Dorsolateral prefrontal cortex (tissue), 120 donors: ENCODE measurements at regions of chr18 and their contacts with region 1.

Region 1: DNA sequence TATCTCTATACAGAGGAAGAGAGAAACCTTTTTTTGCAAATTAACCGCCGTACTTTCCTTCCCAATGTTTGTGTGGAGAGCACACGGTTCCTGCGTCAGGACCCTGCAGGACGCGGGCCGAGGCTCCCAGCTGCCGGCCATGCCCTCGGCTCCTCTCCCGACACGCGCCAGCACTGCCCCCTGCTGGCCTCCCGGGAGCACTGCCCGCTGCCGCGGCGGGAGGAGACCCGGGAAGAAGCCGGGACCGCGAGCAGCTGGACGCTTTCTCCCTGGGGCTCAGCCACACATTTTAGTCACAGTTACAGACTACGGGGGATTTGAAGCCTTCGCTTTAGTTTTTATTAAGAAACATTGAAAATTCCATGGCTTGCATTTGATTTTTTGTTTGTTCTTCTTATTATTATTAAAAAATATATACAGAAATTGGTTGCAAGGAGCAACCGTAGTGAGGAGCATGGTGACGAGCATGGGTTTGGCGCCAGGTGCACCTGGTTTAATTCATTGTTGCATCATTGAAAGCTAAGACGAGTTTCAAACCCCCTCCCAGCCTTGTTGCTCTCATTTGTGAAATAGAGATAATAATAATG is 401.2 kb downstream of the GALR1 start:
- DNase-seq: peak; percentile 29 to 90 (median 64)
- H3K4me3 ChIP-seq: peak overlapping the region in 39 of 59 donors; percentile 1 to 50 (median 23)
- H3K27ac ChIP-seq: no peak overlapping the region
- H3K27me3 ChIP-seq: peaks cover 0 to 5% (median 0%) of the 10 kb centered on the region in 45 donors
- CTCF ChIP-seq: peak; percentile 70 to 99 (median 95)

Region 2: GRCh38 chr18:76922107-76922506 is 728.8 kb before region 1 on chr18:
- intact Hi-C with region 1: loop called in 1 of 2 experiments (anchors 5 kb)
- DNase-seq: peak in 9 of 10 donors; percentile 59 to 81 (median 75)
- H3K4me3 ChIP-seq: no peak overlapping the region
- H3K27ac ChIP-seq: peak overlapping the region in 2 of 59 donors; percentile 2 to 14
- H3K27me3 ChIP-seq: no peaks in the 10 kb centered on the region
- CTCF ChIP-seq: peak; percentile 33 to 98 (median 79)

Region 3: GRCh38 chr18:77000527-77000926 is 650.4 kb before region 1 on chr18:
- intact Hi-C with region 1: loop called in 1 of 2 experiments (anchors 5 kb)
- DNase-seq: peak in 7 of 10 donors; percentile 37 to 70 (median 51)
- H3K4me3 ChIP-seq: peak overlapping the region in 49 of 59 donors; percentile 7 to 84 (median 37)
- H3K27ac ChIP-seq: peak overlapping the region in 51 of 59 donors; percentile 7 to 99 (median 63)
- H3K27me3 ChIP-seq: no peaks in the 10 kb centered on the region
- CTCF ChIP-seq: peak; percentile 87 to 100 (median 95)

Region 4: DNA sequence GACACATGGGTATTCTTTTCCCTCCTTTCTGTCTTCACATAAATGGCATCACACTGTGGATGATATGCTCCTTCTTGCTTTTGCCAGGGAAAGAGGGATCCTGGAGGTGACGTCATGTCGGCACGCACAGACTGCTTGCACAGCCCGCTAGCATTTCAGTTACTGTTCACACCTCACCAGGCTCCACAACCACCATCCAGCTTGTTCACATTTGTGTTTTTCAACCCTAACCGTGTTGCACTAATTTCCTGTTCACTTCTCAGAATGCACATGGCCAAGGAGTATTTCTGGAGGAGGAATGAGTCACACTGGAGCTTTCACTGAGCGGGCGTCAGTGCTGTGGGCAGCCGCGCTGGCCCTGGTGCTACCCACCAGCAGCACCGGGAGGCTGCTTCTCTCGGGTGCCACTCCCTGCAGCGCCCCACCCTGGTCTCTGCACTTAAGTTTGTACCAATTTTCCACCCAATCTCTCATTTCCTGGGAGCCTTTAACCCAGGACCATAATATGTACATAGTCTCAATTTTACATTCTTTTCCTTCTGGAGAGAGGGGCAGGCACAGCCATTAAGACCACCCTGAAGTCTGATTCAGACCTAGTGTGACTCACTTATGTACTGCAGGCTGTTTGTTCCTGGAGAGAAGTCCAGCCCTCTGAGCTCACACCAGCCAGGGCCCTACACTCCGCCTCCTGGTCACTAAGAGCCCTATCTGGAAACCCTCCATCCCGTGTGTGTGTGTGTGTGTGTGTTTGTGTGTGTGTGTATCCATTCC is 583.4 kb before region 1 on chr18:
- intact Hi-C with region 1: loop called in 1 of 2 experiments (anchors 2 kb)
- DNase-seq: peak in 4 of 10 donors; percentile 54 to 74 (median 68)
- H3K4me3 ChIP-seq: peak overlapping the region in 2 of 59 donors; percentile 1 to 4
- H3K27ac ChIP-seq: peak overlapping the region in 50 of 59 donors; percentile 7 to 85 (median 58)
- H3K27me3 ChIP-seq: no peaks in the 10 kb centered on the region
- CTCF ChIP-seq: peak in 4 of 56 donors; percentile 5 to 36 (median 19)

Region 5: DNA sequence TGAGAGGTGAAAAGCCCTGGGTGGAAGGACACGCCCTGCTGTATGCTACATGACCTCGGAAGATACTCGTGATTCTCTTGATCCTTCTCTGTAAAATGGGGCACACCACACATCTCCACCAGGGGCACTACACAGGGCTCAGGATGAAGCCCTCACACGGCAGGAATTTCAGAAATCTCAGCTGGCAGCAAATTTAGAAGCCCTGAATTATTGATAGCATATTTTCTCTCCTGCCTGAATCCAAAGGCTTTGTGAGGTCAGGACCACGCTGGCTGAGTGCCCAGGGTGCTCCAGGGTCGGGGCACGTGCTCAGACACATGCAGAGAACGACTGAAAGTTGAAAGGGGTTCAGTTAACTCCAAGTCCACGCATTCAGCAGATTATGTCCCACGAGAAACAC is 443.4 kb before region 1 on chr18:
- intact Hi-C with region 1: loop called in 1 of 2 experiments (anchors 10 kb)
- DNase-seq: peak in 1 of 10 donors; percentile 44
- H3K4me3 ChIP-seq: peak overlapping the region in 23 of 59 donors; percentile 1 to 51 (median 20)
- H3K27ac ChIP-seq: peak overlapping the region in 3 of 59 donors; percentile 17 to 54 (median 36)
- H3K27me3 ChIP-seq: no peaks in the 10 kb centered on the region
- CTCF ChIP-seq: peak in 55 of 56 donors; percentile 14 to 74 (median 55)

Region 6: DNA sequence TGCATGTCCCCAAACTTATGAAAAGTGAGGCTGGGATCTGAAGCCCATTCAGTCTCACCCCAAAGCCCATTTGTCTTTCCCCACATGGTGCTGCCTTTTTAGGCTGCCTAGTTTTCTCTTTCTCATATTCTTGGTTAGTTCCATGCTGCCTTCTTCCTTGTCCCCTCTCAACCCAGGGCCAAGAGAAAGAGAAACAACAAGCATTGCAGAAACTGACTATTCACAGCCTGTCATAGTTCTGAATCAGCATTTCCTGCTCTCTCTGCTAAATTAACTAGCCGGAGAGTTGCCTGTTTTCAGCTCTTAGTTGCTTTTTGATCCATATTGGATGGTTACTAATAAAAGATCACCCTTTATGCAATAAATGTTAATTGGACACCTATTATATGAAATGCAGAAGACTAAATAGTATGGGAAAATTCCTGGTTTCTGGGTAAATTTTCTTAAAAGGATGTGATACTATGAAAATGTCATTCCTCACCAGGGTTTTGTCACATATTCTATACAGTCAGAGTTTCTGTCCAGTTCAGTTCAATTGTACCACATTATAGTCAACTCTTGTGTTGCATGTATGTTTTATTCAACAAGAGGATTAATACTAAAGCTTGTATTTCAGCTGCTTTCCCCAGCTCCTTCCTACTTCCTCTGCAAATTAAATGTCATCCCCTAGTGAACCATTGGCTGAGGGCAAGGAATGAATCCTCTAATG is 154.8 kb before region 1 on chr18:
- intact Hi-C with region 1: no loop called
- DNase-seq: no peak
- H3K4me3 ChIP-seq: no peak overlapping the region
- H3K27ac ChIP-seq: peak overlapping the region in 1 of 59 donors; percentile 11
- H3K27me3 ChIP-seq: no peaks in the 10 kb centered on the region
- CTCF ChIP-seq: no peak

Region 7: DNA sequence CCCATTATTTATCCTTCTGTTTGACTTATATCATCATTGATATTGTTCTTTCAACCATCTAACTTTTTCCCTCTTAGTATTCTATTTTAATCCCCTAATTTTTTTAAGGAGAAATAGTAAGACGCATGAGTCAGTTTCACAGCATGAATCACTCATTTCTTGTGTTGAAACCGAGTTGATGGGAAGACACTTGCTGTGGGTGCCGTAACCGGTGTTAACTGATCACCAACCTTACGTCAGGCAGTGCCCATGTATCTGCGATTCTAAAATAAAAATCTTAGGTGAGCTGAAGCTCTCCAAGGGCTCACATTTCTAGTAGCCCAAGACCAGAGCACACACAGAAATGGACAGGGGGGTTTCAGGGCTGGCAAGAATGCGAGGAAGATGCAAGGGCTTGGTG is 53.2 kb before region 1 on chr18:
- intact Hi-C with region 1: loop called in 1 of 2 experiments (anchors 10 kb)
- DNase-seq: no peak
- H3K4me3 ChIP-seq: no peak overlapping the region
- H3K27ac ChIP-seq: no peak overlapping the region
- H3K27me3 ChIP-seq: peaks cover 0 to 7% (median 0%) of the 10 kb centered on the region in 45 donors
- CTCF ChIP-seq: no peak

Region 8: GRCh38 chr18:77737412-77737811 is 86.5 kb after region 1 on chr18:
- intact Hi-C with region 1: no loop called
- DNase-seq: no peak
- H3K4me3 ChIP-seq: no peak overlapping the region
- H3K27ac ChIP-seq: no peak overlapping the region
- H3K27me3 ChIP-seq: peaks cover 0 to 14% (median 0%) of the 10 kb centered on the region in 45 donors
- CTCF ChIP-seq: no peak